ENCODE measurements at regions of chr17 and their contacts with region 1.

Region 1: DNA sequence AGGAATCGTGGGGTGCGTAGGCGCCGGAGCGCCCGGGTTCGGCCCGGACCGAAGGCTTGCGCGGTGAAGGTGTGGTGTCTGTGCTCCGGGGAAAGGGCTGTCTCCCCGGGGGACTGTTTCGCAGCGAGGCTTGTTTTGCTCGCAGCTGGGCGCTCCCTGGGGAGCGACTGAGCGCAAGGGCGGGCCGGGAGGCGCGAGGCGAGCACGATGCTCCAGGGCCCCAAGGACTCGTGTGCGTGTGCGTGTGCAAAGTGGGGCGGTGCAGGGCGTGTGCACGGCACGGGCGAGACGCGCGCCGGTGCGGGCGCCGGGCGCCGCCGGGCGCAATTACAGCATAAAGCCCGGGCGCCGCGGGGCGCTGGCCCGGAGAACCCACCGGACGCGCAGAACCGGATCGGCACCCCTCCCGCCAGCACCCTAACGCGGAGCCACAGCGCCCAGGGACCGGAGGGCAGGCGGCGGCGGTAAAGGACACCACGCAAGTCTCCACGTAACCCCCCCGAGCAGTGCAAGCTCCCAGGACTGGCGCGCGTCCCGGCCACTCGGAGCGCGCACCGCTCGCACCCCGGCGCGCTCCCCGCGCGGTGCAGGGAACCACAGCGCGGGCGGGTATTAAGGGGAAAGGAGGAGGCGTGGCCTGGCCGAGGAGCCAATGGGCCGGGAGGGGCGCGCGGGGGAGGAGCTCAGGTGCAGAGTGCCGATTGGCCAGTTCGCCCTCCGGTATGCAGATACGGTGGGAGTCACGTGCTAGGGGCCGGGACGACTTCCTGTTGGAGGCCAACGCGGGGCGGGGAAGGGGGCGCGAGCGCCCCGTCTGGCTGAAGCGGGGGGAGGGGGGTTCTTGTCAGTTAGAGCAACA is at the start of gene TNRC6C:
- DNase-seq: peak; percentile 97 to 100 (median 100)
- ATAC-seq: peak; percentile 78 to 86
- H3K4me3 Mint-ChIP-seq: peak within 1 kb of the TSS; percentile 96 to 100 (median 99)
- H3K27ac Mint-ChIP-seq: peak within 1 kb of the TSS; percentile 94 to 99 (median 97)
- H3K4me1 Mint-ChIP-seq: peaks cover 33 to 49% (median 42%) of the 10 kb centered on the region in 4 donors
- H3K27me3 Mint-ChIP-seq: peaks cover 0 to 11% (median 0%) of the 10 kb centered on the region in 5 donors
- polyA plus RNA-seq, gene TNRC6C: 4.9 to 8.6 (median 5.8) TPM

Region 2: DNA sequence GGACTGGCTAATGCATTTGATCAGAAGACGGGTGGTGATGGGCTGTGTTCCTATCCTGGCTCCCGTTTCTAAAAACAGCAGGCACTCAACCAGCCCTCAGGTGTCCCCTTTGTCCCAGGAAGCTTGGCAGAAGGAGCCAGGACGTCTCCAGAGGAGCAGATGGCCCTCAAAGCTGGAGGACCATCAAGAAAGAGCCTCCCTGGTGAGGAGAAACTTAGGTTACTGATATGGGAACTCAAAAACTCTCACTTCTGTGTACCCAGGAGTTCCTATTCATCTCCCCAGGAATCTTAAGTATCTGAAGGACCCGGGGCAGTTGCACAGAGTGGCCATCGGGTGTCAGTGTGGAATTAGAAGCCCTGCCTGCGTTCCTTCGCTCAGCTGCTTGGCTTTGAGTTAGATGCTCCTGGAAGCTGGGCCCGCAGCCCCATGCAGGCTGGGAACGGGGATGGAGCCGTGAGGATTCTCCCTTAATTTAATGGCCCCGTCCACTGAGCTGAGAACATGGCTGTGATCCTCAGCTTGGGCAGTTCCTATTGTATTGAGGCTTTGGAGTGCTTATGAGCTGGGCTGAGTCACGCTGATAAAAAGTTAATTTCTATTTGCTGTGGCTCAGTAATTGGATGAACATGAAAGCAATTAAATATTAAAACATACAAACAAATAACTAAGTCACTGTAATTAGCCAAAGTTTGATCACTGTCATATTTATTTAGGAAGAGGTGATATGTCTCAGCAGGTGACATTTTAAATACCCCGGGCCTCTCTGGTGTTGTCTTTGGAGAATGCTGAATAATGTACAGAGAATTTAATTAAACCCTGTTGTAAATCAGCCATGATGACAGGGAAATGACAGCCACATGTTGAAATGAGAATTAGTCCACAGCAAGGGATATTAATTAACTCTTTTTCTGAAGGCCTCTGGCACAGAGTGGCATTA is 415.3 kb before region 1 on chr17:
- POLR2A ChIA-PET with region 1: interaction called, 11 read pairs
- DNase-seq: peak; percentile 42 to 83 (median 62)
- ATAC-seq: peak; percentile 85 to 95
- H3K4me3 Mint-ChIP-seq: no peak overlapping the region
- H3K27ac Mint-ChIP-seq: no peak overlapping the region
- H3K4me1 Mint-ChIP-seq: peaks cover 3 to 6% (median 4%) of the 10 kb centered on the region in 4 donors
- H3K27me3 Mint-ChIP-seq: peaks cover 0 to 1% (median 0%) of the 10 kb centered on the region in 5 donors

Region 3: DNA sequence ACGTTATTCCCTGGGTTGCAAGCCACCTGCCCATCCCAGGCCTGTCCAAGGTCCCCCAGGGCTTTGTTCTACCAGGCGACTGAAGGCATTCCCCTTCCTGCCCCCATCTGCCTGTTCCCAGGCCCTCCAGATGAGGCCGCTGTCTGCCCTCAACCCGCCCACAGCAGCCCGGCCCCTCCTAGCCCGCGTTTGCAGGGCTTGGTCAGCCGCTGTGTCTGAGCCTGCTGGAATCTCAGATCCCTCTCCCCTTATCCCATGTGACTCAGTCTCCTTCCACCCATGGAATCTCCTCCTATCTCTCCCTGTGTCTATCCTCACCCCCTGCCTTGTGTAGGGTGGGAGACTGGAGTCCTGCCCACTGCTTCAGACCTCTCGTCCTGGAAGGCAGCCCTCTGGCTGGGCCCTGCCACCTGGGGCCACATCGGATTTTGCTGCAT is 185.6 kb before region 1 on chr17:
- POLR2A ChIA-PET with region 1: interaction called, 15 read pairs
- DNase-seq: peak; percentile 40 to 79 (median 64)
- ATAC-seq: peak; percentile 93 to 99
- H3K4me3 Mint-ChIP-seq: peak overlapping the region in 2 of 10 donors; percentile 40 to 43
- H3K27ac Mint-ChIP-seq: peak overlapping the region in 5 of 10 donors; percentile 33 to 80 (median 64)
- H3K4me1 Mint-ChIP-seq: peaks cover 10 to 17% (median 13%) of the 10 kb centered on the region in 4 donors
- H3K27me3 Mint-ChIP-seq: no peaks in the 10 kb centered on the region

Region 4: GRCh38 chr17:77869665-77870132 is 88.4 kb before region 1 on chr17:
- POLR2A ChIA-PET with region 1: interaction called, 26 read pairs
- DNase-seq: peak in 2 of 10 donors; percentile 50 to 58
- ATAC-seq: peak; percentile 37 to 50
- H3K4me3 Mint-ChIP-seq: peak overlapping the region in 9 of 10 donors; percentile 20 to 82 (median 54)
- H3K27ac Mint-ChIP-seq: peak overlapping the region in 8 of 10 donors; percentile 1 to 73 (median 52)
- H3K4me1 Mint-ChIP-seq: peaks cover 34 to 83% (median 57%) of the 10 kb centered on the region in 4 donors
- H3K27me3 Mint-ChIP-seq: no peaks in the 10 kb centered on the region

Region 5: GRCh38 chr17:77916703-77917481 is 41.2 kb before region 1 on chr17:
- POLR2A ChIA-PET with region 1: interaction called, 11 read pairs
- DNase-seq: peak in 1 of 10 donors; percentile 27
- ATAC-seq: peak; percentile 55 to 65
- H3K4me3 Mint-ChIP-seq: peak overlapping the region; percentile 44 to 71 (median 61)
- H3K27ac Mint-ChIP-seq: peak overlapping the region in 6 of 10 donors; percentile 4 to 79 (median 39)
- H3K4me1 Mint-ChIP-seq: peaks cover 7 to 29% (median 17%) of the 10 kb centered on the region in 4 donors
- H3K27me3 Mint-ChIP-seq: peaks cover 20 to 48% (median 33%) of the 10 kb centered on the region in 5 donors

Region 6: DNA sequence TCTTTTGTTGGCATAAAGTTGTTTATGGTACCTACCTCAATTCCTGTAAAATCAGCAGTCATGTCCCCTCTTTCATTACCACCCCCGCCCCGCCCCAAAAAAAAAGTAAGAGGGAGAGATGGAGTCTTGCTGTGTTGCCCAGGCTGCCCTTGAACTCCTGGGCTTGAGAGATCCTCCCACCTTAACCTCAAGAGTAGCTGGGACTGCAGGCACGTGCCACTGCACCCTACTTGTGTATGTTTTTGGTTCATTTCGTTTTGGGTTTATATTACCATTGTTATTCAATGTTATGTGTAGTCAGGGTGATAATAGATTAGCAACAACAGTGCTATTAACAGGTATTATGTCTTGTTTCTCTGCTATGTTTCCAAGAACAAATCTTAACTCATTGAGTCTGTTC is 16.3 kb after region 1 on chr17:
- POLR2A ChIA-PET with region 1: interaction called, 15 read pairs
- DNase-seq: peak in 1 of 10 donors; percentile 35
- ATAC-seq: peak; percentile 72 to 82
- H3K4me3 Mint-ChIP-seq: peak overlapping the region in 6 of 10 donors; percentile 15 to 59 (median 36)
- H3K27ac Mint-ChIP-seq: peak overlapping the region in 6 of 10 donors; percentile 12 to 74 (median 48)
- H3K4me1 Mint-ChIP-seq: peaks cover 40 to 89% (median 82%) of the 10 kb centered on the region in 4 donors
- H3K27me3 Mint-ChIP-seq: no peaks in the 10 kb centered on the region

Region 7: DNA sequence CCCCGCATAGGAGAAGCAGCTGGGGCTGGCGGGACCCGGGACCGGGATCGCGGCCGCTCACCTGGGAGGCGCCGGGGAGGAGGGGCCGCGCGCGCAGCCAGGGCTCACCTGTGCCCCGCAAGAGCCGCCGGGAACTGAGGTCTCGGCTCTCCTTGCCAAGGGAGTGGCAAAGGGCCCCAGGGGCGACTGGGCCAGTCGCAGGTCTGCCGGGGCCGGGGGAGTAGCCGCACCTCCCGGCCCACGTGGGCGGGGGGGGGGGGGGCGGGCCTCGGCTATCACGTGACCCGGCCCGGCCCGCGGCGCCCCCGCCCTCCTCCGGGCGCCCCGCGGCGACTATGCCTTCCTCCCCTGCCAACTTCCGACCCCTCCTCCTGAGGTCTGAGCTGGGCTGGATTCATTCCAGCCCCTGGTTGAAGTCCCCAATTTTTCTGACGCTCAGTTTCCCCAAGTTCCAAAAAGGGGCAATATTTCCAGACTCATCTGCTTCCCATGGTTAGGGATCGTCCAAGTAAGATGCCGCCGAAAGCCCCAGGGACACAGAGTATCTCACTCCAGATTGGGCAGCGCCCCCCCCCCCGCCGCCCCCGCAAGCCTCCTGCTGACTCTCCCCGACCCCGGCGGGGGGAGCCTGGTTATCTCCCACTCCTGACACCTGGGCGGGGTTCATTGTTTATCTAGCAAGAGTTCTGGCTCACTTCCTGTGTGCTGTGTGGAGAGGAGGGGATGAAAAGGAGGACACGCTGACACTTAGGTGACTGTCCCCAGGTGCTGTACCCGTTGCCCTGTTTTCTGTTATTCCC is 170.7 kb after region 1 on chr17 and contains the start of gene TMC6:
- POLR2A ChIA-PET with region 1: interaction called, 21 read pairs
- DNase-seq: peak; percentile 70 to 94 (median 82)
- ATAC-seq: peak; percentile 16 to 50
- H3K4me3 Mint-ChIP-seq: peak within 1 kb of the TSS; percentile 96 to 100 (median 98)
- H3K27ac Mint-ChIP-seq: peak within 1 kb of the TSS; percentile 90 to 100 (median 97)
- H3K4me1 Mint-ChIP-seq: peaks cover 28 to 65% (median 57%) of the 10 kb centered on the region in 4 donors
- H3K27me3 Mint-ChIP-seq: no peaks in the 10 kb centered on the region
- polyA plus RNA-seq, gene TMC6: 186 to 253 (median 209) TPM